GM12878 (cell line): ENCODE measurements at regions of chr3 and their contacts with region 1.

Region 1: GRCh38 chr3:180961087-180961486 is 28.4 kb downstream of the DNAJC19 start:
- DNase-seq: no peak
- ATAC-seq: no peak
- H3K4me3 ChIP-seq: no peak overlapping the region
- H3K27ac ChIP-seq: no peak overlapping the region
- H3K4me1 ChIP-seq: no peaks in the 10 kb centered on the region
- H3K27me3 ChIP-seq: no peaks in the 10 kb centered on the region
- CTCF ChIP-seq: no peak
- EP300 ChIP-seq: no peak
- POLR2A ChIP-seq: no peak
- RAD21 ChIP-seq: no peak

Region 2: GRCh38 chr3:180820400-180820799 is 140.7 kb before region 1 on chr3:
- CTCF ChIA-PET with region 1: no interaction called
- POLR2A ChIA-PET with region 1: no interaction called
- RAD21 ChIA-PET with region 1: no interaction called
- SMC1A ChIA-PET with region 1: no interaction called
- in situ Hi-C with region 1: no loop called
- intact Hi-C with region 1: no loop called
- DNase-seq: no peak
- ATAC-seq: no peak
- H3K4me3 ChIP-seq: no peak overlapping the region
- H3K27ac ChIP-seq: no peak overlapping the region
- H3K4me1 ChIP-seq: no peaks in the 10 kb centered on the region
- H3K27me3 ChIP-seq: no peaks in the 10 kb centered on the region; a peak in 2 of 4 replicates
- CTCF ChIP-seq: no peak
- EP300 ChIP-seq: no peak
- POLR2A ChIP-seq: no peak
- RAD21 ChIP-seq: no peak

Region 3: GRCh38 chr3:180898572-180898971 is 62.5 kb before region 1 on chr3:
- CTCF ChIA-PET with region 1: no interaction called
- POLR2A ChIA-PET with region 1: no interaction called
- RAD21 ChIA-PET with region 1: no interaction called
- SMC1A ChIA-PET with region 1: no interaction called
- in situ Hi-C with region 1: no loop called
- intact Hi-C with region 1: no loop called
- DNase-seq: no peak
- ATAC-seq: no peak
- H3K4me3 ChIP-seq: no peak overlapping the region
- H3K27ac ChIP-seq: no peak overlapping the region
- H3K4me1 ChIP-seq: no peaks in the 10 kb centered on the region
- H3K27me3 ChIP-seq: no peaks in the 10 kb centered on the region
- CTCF ChIP-seq: no peak
- EP300 ChIP-seq: no peak
- POLR2A ChIP-seq: no peak
- RAD21 ChIP-seq: no peak

Region 4: DNA sequence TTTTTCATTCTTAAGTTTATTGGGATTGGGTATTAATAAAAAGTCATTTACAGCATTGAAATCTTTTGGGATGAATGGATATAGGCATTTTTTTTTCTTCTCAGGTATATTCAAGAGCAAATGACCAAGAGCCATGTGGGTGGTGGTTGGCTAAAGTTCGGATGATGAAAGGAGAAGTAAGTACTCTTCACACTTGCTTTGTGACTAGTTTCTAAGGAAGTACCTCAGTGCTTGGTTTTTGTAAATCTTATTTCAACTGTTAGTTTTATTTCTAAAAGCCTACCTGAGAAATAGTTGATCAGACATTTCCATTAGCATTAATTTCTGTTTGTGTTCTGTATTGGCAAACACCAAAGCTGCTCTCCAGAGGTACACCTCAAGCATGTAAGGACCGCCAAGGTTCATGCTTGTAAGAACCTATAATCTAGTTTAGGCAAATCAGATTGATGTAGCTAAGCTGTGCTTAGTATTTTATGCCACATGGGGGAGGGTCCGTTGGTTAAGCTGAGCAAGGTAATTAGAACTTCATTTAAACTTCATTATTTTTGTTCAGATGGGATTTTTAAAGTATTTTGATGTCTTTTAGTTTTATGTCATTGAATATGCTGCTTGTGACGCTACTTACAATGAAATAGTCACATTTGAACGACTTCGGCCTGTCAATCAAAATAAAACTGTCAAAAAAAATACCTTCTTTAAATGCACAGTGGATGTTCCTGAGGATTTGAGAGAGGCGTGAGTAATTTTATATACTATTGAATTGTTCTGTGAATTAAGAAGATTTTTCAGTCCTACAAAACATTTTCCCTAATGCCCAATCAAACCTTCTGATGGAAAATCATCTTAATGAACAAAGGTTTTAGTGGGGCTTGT is 13.1 kb before region 1 on chr3:
- CTCF ChIA-PET with region 1: interaction called, 10 read pairs
- POLR2A ChIA-PET with region 1: no interaction called
- RAD21 ChIA-PET with region 1: no interaction called
- SMC1A ChIA-PET with region 1: interaction called, 7 read pairs
- in situ Hi-C with region 1: no loop called
- intact Hi-C with region 1: no loop called
- DNase-seq: no peak
- ATAC-seq: peak; percentile 65
- H3K4me3 ChIP-seq: no peak overlapping the region
- H3K27ac ChIP-seq: no peak overlapping the region; the same call in 1 of the 2 replicates
- H3K4me1 ChIP-seq: no peaks in the 10 kb centered on the region
- H3K27me3 ChIP-seq: no peaks in the 10 kb centered on the region
- CTCF ChIP-seq: no peak
- EP300 ChIP-seq: no peak
- POLR2A ChIP-seq: no peak
- RAD21 ChIP-seq: no peak